ENCODE measurements at regions of chr11 and their contacts with region 1.

Region 1: GRCh38 chr11:6682936-6683861 is at the start of gene MRPL17:
- DNase-seq: peak; percentile 96 to 100
- H3K4me3 ChIP-seq: peak within 1 kb of the TSS; percentile 81 to 90
- H3K27ac ChIP-seq: peak within 1 kb of the TSS; percentile 80 to 93
- H3K4me1 ChIP-seq: peaks cover 0 to 9% of the 10 kb centered on the region in 2 donors
- H3K27me3 ChIP-seq: no peaks in the 10 kb centered on the region
- CTCF ChIP-seq: peak; percentile 83 to 96 (median 89)
- total RNA-seq, gene MRPL17: 12.9 TPM

Region 2: DNA sequence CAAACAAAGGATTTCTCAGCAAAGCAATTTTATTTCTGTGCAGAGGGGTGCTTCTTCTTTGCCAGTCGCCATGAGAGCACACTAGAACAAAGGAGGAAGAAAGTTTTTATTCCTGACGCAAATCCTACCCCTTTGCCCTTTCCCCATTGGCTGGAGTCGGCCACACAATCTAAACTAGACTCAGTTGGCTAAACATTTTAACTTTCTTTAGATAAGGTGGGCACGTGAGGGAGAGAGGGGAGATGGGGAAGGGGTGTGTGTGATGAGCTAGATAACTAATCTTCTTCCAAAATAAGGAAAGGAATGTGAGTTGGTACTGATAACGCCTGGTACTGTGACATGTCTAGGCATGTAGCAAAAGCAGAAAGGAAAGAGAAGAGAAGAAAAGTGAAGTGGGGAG is 993.0 kb before region 1 on chr11:
- intact Hi-C with region 1: loop called (anchors 10 kb)
- DNase-seq: no peak
- H3K4me3 ChIP-seq: peak overlapping the region; percentile 48 to 63
- H3K27ac ChIP-seq: peak overlapping the region; percentile 82 to 87
- H3K4me1 ChIP-seq: peaks cover 3 to 20% of the 10 kb centered on the region in 2 donors
- H3K27me3 ChIP-seq: no peaks in the 10 kb centered on the region
- CTCF ChIP-seq: no peak

Region 3: GRCh38 chr11:6473481-6474422 is 209.4 kb before region 1 on chr11 and contains the start of gene TRIM3:
- intact Hi-C with region 1: loop called (anchors 5 kb)
- DNase-seq: peak; percentile 74 to 96
- H3K4me3 ChIP-seq: peak within 1 kb of the TSS; percentile 85 to 88
- H3K27ac ChIP-seq: peak within 1 kb of the TSS; percentile 94 to 96
- H3K4me1 ChIP-seq: peaks cover 7 to 24% of the 10 kb centered on the region in 2 donors
- H3K27me3 ChIP-seq: no peaks in the 10 kb centered on the region
- CTCF ChIP-seq: peak in 2 of 3 experiments; percentile 22 to 39
- total RNA-seq, gene TRIM3: 33.8 TPM

Region 4: GRCh38 chr11:6603287-6604080 is 79.7 kb before region 1 on chr11 and contains the starts of genes ILK and RRP8:
- intact Hi-C with region 1: loop called (anchors 1 kb)
- DNase-seq: peak; percentile 59 to 95
- H3K4me3 ChIP-seq: peak within 1 kb of the TSS; percentile 64 to 92
- H3K27ac ChIP-seq: peak within 1 kb of the TSS; percentile 95 to 97
- H3K4me1 ChIP-seq: peaks cover 25 to 34% of the 10 kb centered on the region in 2 donors
- H3K27me3 ChIP-seq: no peaks in the 10 kb centered on the region
- CTCF ChIP-seq: peak in 1 of 3 experiments; percentile 40
- total RNA-seq, gene ILK: 183 TPM
- total RNA-seq, gene RRP8: 9.2 TPM

Region 5: GRCh38 chr11:6655020-6655789 is 28.0 kb before region 1 on chr11:
- intact Hi-C with region 1: loop called (anchors 1 kb)
- DNase-seq: peak in 1 of 2 donors; percentile 81
- H3K4me3 ChIP-seq: peak overlapping the region; percentile 53 to 75
- H3K27ac ChIP-seq: peak overlapping the region; percentile 83 to 91
- H3K4me1 ChIP-seq: peaks cover 0 to 14% of the 10 kb centered on the region in 2 donors
- H3K27me3 ChIP-seq: no peaks in the 10 kb centered on the region
- CTCF ChIP-seq: no peak

Region 6: GRCh38 chr11:6926208-6927029 is 243.2 kb after region 1 on chr11 and contains the start of gene ZNF215:
- intact Hi-C with region 1: no loop called
- DNase-seq: peak; percentile 19 to 86
- H3K4me3 ChIP-seq: peak within 1 kb of the TSS; percentile 78 to 79
- H3K27ac ChIP-seq: peak within 1 kb of the TSS; percentile 40 to 61
- H3K4me1 ChIP-seq: peaks cover 0 to 3% of the 10 kb centered on the region in 2 donors
- H3K27me3 ChIP-seq: no peaks in the 10 kb centered on the region
- CTCF ChIP-seq: no peak
- total RNA-seq, gene ZNF215: not detected

Measured in ascending aorta (tissue), 2 donors.